Mammary epithelial cell (primary cell): ENCODE measurements at regions of chr7 and their contacts with region 1.

Region 1: DNA sequence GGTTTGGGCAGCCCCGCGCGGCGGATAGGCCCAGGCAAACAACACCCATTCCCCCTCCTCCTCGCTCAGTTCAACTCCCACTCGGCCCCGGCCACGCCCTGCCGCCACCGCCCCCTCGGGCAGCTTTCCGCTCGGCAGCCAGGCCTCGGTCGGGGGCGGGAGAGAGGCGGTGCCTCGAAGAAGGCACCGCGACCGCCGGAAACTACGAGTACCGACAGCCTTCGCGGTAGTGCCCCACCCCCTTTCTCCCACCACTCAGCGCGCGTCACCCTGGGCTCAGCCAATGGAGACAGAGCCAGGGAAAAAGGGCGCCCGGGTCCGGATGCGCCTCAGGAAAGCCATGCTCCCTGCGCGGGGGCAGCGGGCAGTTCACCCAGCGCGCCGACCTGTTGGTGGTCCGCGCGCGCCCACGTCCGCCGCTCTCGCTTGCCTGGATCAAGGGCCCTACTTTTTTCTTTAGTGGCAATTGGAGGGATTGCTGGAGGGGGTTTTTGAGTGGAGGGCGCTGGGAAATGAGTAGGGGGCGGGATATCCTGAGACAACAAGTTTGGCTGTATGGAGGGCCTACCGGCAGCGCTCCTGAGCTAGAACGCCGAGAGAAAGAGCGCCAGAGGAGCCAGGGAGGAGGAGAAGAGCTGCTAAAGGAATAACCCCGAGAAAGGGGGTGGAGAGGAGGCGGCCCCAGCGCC is 557 bp upstream of the SP4 start:
- DNase-seq: peak; percentile 99
- H3K4me3 ChIP-seq: peak overlapping the region; percentile 67 to 99 (median 69)
- H3K27ac ChIP-seq: peak overlapping the region; percentile 96
- H3K4me1 ChIP-seq: peaks cover 9% of the 10 kb centered on the region
- H3K27me3 ChIP-seq: no peaks in the 10 kb centered on the region
- CTCF ChIP-seq: no peak

Region 2: GRCh38 chr7:21261627-21262594 is 165.4 kb before region 1 on chr7:
- CTCF ChIA-PET with region 1: interaction called, 5 read pairs
- dilution Hi-C with region 1: no loop called
- in situ Hi-C with region 1: no loop called
- intact Hi-C with region 1: loop called (anchors 2 kb)
- DNase-seq: peak; percentile 14
- H3K4me3 ChIP-seq: no peak overlapping the region
- H3K27ac ChIP-seq: no peak overlapping the region
- H3K4me1 ChIP-seq: no peaks in the 10 kb centered on the region
- H3K27me3 ChIP-seq: peaks cover 2% of the 10 kb centered on the region
- CTCF ChIP-seq: peak; percentile 67 to 69

Region 3: GRCh38 chr7:21945454-21946227 is 518.3 kb after region 1 on chr7 and contains the start of gene CDCA7L:
- CTCF ChIA-PET with region 1: no interaction called
- dilution Hi-C with region 1: no loop called
- in situ Hi-C with region 1: no loop called
- intact Hi-C with region 1: loop called (anchors 5 kb)
- DNase-seq: peak; percentile 81
- H3K4me3 ChIP-seq: peak within 1 kb of the TSS; percentile 74 to 96 (median 79)
- H3K27ac ChIP-seq: peak within 1 kb of the TSS; percentile 77
- H3K4me1 ChIP-seq: peaks cover 16% of the 10 kb centered on the region
- H3K27me3 ChIP-seq: no peaks in the 10 kb centered on the region
- CTCF ChIP-seq: no peak
- total RNA-seq, gene CDCA7L: 8.5 to 29.8 TPM